Right cardiac atrium (tissue), 5 donors: ENCODE measurements at regions of chr7 and their contacts with region 1.

Region 1: DNA sequence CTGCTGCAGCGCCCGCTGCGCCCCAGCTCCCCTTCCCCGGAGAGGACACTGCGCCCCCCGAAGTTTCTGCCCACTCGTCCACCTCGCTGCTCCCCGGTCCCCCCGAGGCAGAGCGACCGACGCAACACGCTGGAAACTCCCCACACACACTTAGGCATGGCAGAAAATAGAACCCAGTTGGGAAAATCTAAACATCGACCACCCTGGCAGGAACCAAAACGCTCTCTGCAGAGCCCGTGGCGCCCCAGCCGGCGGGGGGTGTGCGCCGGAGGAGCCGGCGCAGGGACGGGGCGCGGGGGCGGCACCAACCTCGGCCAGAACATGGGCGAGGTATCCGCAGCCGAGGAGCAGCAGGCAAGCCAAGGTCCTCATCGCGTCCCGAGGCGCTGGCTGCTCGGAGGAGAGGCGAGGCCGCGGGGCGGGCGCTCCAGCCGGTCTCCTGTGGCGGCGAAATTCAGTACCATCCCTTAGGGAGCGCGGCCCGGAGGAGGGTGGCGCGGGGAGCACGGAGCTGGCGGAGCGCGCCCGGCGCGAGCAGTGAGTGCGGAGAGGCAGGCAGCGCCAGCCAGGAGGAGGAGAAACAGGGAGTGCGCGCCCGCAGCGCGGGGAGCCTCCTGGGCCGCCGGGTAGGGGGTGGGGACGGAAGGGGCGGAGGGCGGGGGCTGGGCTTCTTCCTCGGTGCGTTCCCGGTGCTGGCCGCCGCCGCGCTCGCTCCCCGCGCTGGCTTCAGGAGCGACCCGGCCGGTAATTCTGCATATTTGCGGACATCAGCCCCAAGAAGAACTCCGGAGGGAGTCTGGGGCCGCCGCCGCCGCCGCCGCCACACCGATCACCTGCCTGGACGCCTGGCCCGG is 789 bp downstream of the PDGFA start:
- DNase-seq: peak; percentile 84 to 94 (median 93)
- ATAC-seq: peak; percentile 65 to 71
- H3K4me3 ChIP-seq: peak overlapping the region; percentile 87
- H3K27ac ChIP-seq: peak overlapping the region; percentile 86
- H3K4me1 ChIP-seq: peaks cover 4% of the 10 kb centered on the region
- H3K27me3 ChIP-seq: no peaks in the 10 kb centered on the region

Region 2: GRCh38 chr7:332646-333392 is 186.0 kb before region 1 on chr7:
- intact Hi-C with region 1: loop called (anchors 2 to 10 kb)
- DNase-seq: peak; percentile 80 to 94 (median 93)
- ATAC-seq: peak; percentile 92 to 93
- H3K4me3 ChIP-seq: peak overlapping the region; percentile 45
- H3K27ac ChIP-seq: peak overlapping the region; percentile 65
- H3K4me1 ChIP-seq: no peaks in the 10 kb centered on the region
- H3K27me3 ChIP-seq: no peaks in the 10 kb centered on the region

Region 3: GRCh38 chr7:494261-494687 is 24.6 kb before region 1 on chr7:
- intact Hi-C with region 1: no loop called
- DNase-seq: peak; percentile 19 to 54 (median 32)
- ATAC-seq: peak; percentile 23 to 39
- H3K4me3 ChIP-seq: no peak overlapping the region
- H3K27ac ChIP-seq: no peak overlapping the region
- H3K4me1 ChIP-seq: peaks cover 1% of the 10 kb centered on the region
- H3K27me3 ChIP-seq: no peaks in the 10 kb centered on the region

Region 4: GRCh38 chr7:604001-604883 is 85.4 kb after region 1 on chr7:
- intact Hi-C with region 1: no loop called
- DNase-seq: peak; percentile 87 to 94 (median 93)
- ATAC-seq: peak; percentile 91 to 92
- H3K4me3 ChIP-seq: no peak overlapping the region
- H3K27ac ChIP-seq: peak overlapping the region; percentile 82
- H3K4me1 ChIP-seq: no peaks in the 10 kb centered on the region
- H3K27me3 ChIP-seq: no peaks in the 10 kb centered on the region

Region 5: GRCh38 chr7:657565-658119 is 138.8 kb after region 1 on chr7:
- intact Hi-C with region 1: loop called in 3 of 4 experiments (anchors 10 kb)
- DNase-seq: peak in 2 of 3 donors; percentile 44 to 78
- ATAC-seq: peak; percentile 93 to 96
- H3K4me3 ChIP-seq: no peak overlapping the region
- H3K27ac ChIP-seq: peak overlapping the region; percentile 90
- H3K4me1 ChIP-seq: no peaks in the 10 kb centered on the region
- H3K27me3 ChIP-seq: no peaks in the 10 kb centered on the region

Region 6: GRCh38 chr7:726084-726853 is 207.4 kb after region 1 on chr7 and contains the start of gene DNAAF5:
- intact Hi-C with region 1: loop called in 3 of 4 experiments (anchors 5 to 10 kb)
- DNase-seq: peak; percentile 90 to 95 (median 94)
- ATAC-seq: peak; percentile 93 to 94
- H3K4me3 ChIP-seq: peak within 1 kb of the TSS; percentile 92
- H3K27ac ChIP-seq: peak within 1 kb of the TSS; percentile 46
- H3K4me1 ChIP-seq: peaks cover 5% of the 10 kb centered on the region
- H3K27me3 ChIP-seq: no peaks in the 10 kb centered on the region
- total RNA-seq, gene DNAAF5: 12.0 to 20.7 (median 16.1) TPM

Region 7: DNA sequence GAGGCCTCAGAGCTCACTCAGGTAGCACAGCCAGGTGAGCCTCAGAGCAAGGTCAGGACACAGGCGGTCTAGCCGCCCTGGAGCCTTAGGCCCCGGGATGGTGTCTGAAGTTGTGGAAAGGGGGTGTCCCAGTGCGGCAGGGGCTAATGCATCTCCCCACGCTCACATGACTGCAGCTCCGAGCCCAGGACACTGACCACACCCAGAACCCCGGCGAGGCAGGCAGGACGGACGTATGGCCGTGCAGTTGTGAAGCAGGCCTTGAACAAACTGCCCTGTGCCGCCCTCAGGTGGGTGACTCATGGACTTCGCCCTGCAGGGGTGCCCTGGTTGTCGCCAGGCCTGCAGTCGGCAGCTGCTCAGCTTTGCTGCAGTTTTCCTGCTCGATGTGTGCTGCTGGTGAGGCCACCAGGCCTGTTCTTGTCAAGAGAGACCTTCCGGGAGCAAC is 213.3 kb after region 1 on chr7:
- intact Hi-C with region 1: loop called in 3 of 4 experiments (anchors 5 to 10 kb)
- DNase-seq: peak in 2 of 3 donors; percentile 74 to 75
- ATAC-seq: peak; percentile 66 to 79
- H3K4me3 ChIP-seq: no peak overlapping the region
- H3K27ac ChIP-seq: peak overlapping the region; percentile 90
- H3K4me1 ChIP-seq: no peaks in the 10 kb centered on the region
- H3K27me3 ChIP-seq: no peaks in the 10 kb centered on the region